ENCODE measurements at regions of chr11 and their contacts with region 1.

Region 1: GRCh38 chr11:64317957-64318693 is at the start of gene PRDX5:
- DNase-seq: peak; percentile 96 to 97
- ATAC-seq: peak; percentile 87 to 96 (median 93)
- H3K4me3 ChIP-seq: peak within 1 kb of the TSS; percentile 45 to 94 (median 82)
- H3K27ac ChIP-seq: peak within 1 kb of the TSS; percentile 91 to 100 (median 98)
- H3K4me1 ChIP-seq: peaks cover 5 to 47% (median 31%) of the 10 kb centered on the region in 9 donors
- H3K27me3 ChIP-seq: no peaks in the 10 kb centered on the region
- CTCF ChIP-seq: peak in 7 of 9 donors; percentile 34 to 71 (median 55)
- total RNA-seq, gene PRDX5: 264 to 395 (median 288) TPM

Region 2: GRCh38 chr11:63974259-63975143 is 343.6 kb before region 1 on chr11 and contains the start of gene COX8A:
- intact Hi-C with region 1: no loop called
- DNase-seq: peak; percentile 95 to 99
- ATAC-seq: peak; percentile 93 to 98 (median 96)
- H3K4me3 ChIP-seq: peak within 1 kb of the TSS; percentile 55 to 88 (median 80)
- H3K27ac ChIP-seq: peak within 1 kb of the TSS; percentile 93 to 99 (median 98)
- H3K4me1 ChIP-seq: peaks cover 6 to 41% (median 21%) of the 10 kb centered on the region in 9 donors
- H3K27me3 ChIP-seq: no peaks in the 10 kb centered on the region
- CTCF ChIP-seq: peak in 6 of 9 donors; percentile 9 to 46 (median 28)
- total RNA-seq, gene COX8A: 868 to 1,274 (median 1,041) TPM

Region 3: GRCh38 chr11:64352995-64353714 is 35.0 kb after region 1 on chr11:
- intact Hi-C with region 1: loop called in 7 of 10 experiments (anchors 1 to 5 kb)
- DNase-seq: no peak
- ATAC-seq: no peak
- H3K4me3 ChIP-seq: no peak overlapping the region
- H3K27ac ChIP-seq: no peak overlapping the region
- H3K4me1 ChIP-seq: peaks cover 6 to 34% (median 19%) of the 10 kb centered on the region in 9 donors
- H3K27me3 ChIP-seq: no peaks in the 10 kb centered on the region
- CTCF ChIP-seq: no peak

Region 4: DNA sequence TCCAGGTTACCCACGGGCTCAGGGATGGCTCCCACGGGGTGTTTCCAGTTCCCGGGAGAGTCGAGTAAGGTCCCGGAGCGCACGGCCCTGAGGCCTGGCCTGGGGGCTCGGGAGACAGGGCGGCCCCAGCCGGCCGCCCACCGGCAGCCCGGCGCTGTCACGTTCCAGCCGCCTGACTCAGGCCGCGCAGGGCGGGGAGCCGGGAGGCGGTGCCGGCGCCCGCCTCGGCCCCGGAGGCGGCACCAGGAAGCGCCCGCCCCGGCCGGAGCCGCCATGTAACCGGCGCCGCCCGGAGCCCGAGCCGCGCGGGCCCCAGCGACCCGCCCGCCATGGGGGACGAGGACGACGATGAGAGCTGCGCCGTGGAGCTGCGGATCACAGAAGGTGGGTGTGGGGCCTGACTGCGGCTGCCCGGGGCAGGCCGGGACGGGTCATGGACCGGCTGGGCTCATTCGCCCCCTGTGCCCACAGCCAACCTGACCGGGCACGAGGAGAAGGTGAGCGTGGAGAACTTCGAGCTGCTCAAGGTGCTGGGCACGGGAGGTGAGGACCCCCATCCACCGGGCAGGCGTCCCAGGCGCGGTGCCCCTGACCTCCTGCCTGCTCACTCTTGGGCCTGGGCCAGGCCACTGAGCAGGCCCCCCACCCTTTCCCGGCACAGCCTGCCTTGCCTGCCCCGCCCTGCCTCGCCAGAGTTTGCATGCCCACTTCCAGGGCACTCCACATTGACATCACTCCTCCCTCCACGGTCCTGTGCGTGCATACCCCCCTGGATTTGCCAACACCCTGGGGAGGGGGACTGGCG is 41.0 kb after region 1 on chr11 and contains the start of gene RPS6KA4:
- intact Hi-C with region 1: loop called in 7 of 10 experiments (anchors 1 to 5 kb)
- DNase-seq: peak; percentile 51 to 73
- ATAC-seq: peak; percentile 69 to 95 (median 80)
- H3K4me3 ChIP-seq: peak within 1 kb of the TSS; percentile 64 to 99 (median 92)
- H3K27ac ChIP-seq: peak within 1 kb of the TSS; percentile 60 to 97 (median 93)
- H3K4me1 ChIP-seq: peaks cover 8 to 48% (median 36%) of the 10 kb centered on the region in 9 donors
- H3K27me3 ChIP-seq: no peaks in the 10 kb centered on the region
- CTCF ChIP-seq: peak in 1 of 9 donors; percentile 12
- total RNA-seq, gene RPS6KA4: 10.7 to 21.9 (median 12.8) TPM

Measured in heart right ventricle (tissue), 16 donors.